ENCODE measurements at regions of chr9 and their contacts with region 1.

Region 1: DNA sequence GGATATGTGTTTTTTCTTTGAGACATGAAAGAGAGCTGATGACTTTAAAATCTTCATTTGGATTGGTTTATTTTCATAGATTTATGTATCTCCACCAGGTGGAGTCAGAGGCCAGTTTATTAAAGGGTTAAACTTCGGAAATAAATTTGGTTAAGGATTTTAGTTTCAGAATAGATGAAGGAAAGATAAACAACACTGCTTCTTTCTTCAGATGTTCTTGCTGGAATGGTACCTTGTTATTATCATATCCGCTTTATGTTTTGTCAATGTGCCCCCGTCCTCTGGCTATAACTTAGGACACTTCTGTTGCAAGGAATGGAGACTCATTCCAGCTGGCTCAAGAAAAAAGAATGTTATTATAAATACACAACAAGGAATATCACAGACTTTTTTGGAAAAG is 81.2 kb downstream of the ALDH1A1 start:
- DNase-seq: no peak
- ATAC-seq: no peak
- H3K4me3 ChIP-seq: no peak overlapping the region
- H3K27ac ChIP-seq: no peak overlapping the region
- H3K4me1 ChIP-seq: no peaks in the 10 kb centered on the region
- H3K27me3 ChIP-seq: no peaks in the 10 kb centered on the region; a peak in 1 of 4 replicates
- CTCF ChIP-seq: peak in 2 of 3 experiments; percentile 14 to 36; a peak in 1 of 6 replicates
- EP300 ChIP-seq: no peak
- POLR2A ChIP-seq: no peak
- RAD21 ChIP-seq: peak; percentile 50

Region 2: DNA sequence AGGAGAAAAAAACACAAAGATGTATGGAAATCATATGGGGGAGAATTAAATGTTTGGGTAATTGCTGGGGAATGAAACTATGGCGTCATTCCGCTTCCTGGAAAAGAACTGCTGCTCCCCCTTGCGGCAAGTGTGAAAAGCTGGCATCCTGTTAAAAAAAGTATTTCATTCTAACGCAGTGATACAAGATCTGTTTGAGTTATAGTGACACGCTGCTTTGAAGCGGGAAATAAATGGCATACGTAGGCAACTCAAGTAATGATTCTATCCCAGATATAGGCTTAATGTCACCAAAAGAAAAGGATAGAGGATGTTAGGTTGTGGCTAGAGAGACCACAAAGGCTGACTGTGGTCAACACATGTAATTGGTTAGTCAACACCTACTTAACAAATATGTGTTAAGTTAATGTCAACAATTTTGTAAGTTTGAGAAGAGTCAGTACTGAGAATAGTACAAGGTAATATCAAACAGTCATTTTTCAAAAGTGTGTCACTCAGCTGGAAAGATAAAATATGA is 151.4 kb after region 1 on chr9:
- CTCF ChIA-PET with region 1: interaction called, 37 read pairs
- POLR2A ChIA-PET with region 1: no interaction called
- RAD21 ChIA-PET with region 1: interaction called, 9 read pairs
- SMC1A ChIA-PET with region 1: interaction called, 11 read pairs
- in situ Hi-C with region 1: no loop called
- intact Hi-C with region 1: loop called (anchors 1 kb)
- DNase-seq: peak; percentile 3
- ATAC-seq: peak; percentile 64
- H3K4me3 ChIP-seq: no peak overlapping the region
- H3K27ac ChIP-seq: no peak overlapping the region
- H3K4me1 ChIP-seq: no peaks in the 10 kb centered on the region
- H3K27me3 ChIP-seq: no peaks in the 10 kb centered on the region; a peak in 1 of 4 replicates
- CTCF ChIP-seq: peak; percentile 65 to 78 (median 70); a peak in 5 of 6 replicates
- EP300 ChIP-seq: no peak
- POLR2A ChIP-seq: no peak
- RAD21 ChIP-seq: peak; percentile 63

Region 3: DNA sequence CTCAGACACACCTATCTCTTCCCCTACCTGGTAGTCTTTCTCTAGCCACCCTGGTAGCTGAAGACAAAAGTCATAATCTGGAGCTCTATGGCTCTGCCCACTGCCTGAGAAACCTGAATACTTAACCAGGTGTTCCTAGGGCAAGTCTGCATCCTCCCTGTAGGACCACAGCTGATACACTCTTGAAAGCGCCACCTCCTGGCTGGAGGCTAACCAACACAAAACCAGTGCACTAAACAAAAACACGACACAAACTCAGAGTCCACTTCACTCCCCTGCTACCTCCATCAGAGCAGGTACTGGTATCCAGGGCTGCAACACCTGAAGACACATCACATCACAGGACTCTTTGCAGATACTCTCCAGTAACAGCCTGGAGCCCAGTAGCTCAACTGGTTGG is 195.4 kb after region 1 on chr9:
- CTCF ChIA-PET with region 1: interaction called, 5 read pairs
- POLR2A ChIA-PET with region 1: no interaction called
- RAD21 ChIA-PET with region 1: no interaction called
- SMC1A ChIA-PET with region 1: interaction called, 10 read pairs
- in situ Hi-C with region 1: no loop called
- intact Hi-C with region 1: loop called (anchors 5 kb)
- DNase-seq: no peak
- ATAC-seq: peak; percentile 28; the same call in 1 of the 3 replicates
- H3K4me3 ChIP-seq: no peak overlapping the region
- H3K27ac ChIP-seq: no peak overlapping the region
- H3K4me1 ChIP-seq: no peaks in the 10 kb centered on the region
- H3K27me3 ChIP-seq: no peaks in the 10 kb centered on the region
- CTCF ChIP-seq: peak; percentile 13 to 32 (median 28); a peak in 3 of 6 replicates
- EP300 ChIP-seq: no peak
- POLR2A ChIP-seq: no peak
- RAD21 ChIP-seq: peak; percentile 10; the same call in 1 of the 2 replicates

Region 4: DNA sequence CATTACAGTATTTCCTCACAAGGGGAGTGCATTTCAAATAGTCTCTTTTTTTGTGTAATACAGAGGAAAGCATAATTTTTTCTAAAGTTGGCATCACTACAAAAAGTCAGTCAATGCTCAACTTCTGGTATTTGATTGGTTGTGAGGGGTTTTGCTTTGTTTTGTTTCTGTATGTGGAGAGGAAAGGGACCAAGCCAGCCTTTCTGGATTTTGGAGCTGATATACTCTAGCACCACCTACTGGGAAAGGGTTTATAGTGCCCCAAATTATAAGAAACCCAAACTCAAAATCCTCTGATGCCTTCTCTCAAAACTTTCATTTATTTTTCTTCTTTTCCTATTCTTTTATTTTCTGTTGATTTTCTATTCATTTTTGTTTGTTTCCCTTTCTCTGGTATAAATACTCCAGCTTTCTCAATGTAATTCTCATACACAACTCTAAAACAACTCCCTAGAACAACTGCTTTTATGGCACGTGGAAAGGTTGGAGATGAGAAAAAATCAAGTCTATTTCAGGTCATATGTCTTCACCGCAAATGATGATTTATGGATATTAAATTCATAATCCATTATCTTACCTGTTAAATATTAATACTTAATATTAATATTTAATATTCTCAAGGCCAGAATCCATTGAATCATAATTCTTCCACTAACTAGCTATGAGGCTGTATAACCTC is 210.4 kb after region 1 on chr9:
- CTCF ChIA-PET with region 1: interaction called, 13 read pairs
- POLR2A ChIA-PET with region 1: no interaction called
- RAD21 ChIA-PET with region 1: interaction called, 3 read pairs
- SMC1A ChIA-PET with region 1: interaction called, 3 read pairs
- in situ Hi-C with region 1: no loop called
- intact Hi-C with region 1: loop called (anchors 1 kb)
- DNase-seq: no peak
- ATAC-seq: peak; percentile 69
- H3K4me3 ChIP-seq: no peak overlapping the region
- H3K27ac ChIP-seq: no peak overlapping the region
- H3K4me1 ChIP-seq: no peaks in the 10 kb centered on the region
- H3K27me3 ChIP-seq: no peaks in the 10 kb centered on the region
- CTCF ChIP-seq: peak; percentile 64 to 76 (median 67)
- EP300 ChIP-seq: no peak
- POLR2A ChIP-seq: no peak
- RAD21 ChIP-seq: peak; percentile 75

Measured in GM12878 (cell line).